GM18951 (cell line): ENCODE measurements at regions of chr12 and their contacts with region 1.

Region 1: GRCh38 chr12:75334384-75335030 is at the start of gene GLIPR1L1:
- POLR2A ChIP-seq: no peak

Region 2: GRCh38 chr12:75480469-75480949 is 146.0 kb after region 1 on chr12 and contains the start of gene GLIPR1:
- in situ Hi-C with region 1: loop called (anchors 10 kb)
- POLR2A ChIP-seq: peak; percentile 84